Activated B cell treated with CpG ODN at 0.5 μM for 24 hours (primary cell): ENCODE measurements at regions of chr5 and their contacts with region 1.

Region 1: GRCh38 chr5:115962503-115963402 is 478 bp downstream of the LVRN start:
- DNase-seq: peak; percentile 22
- ATAC-seq: peak; percentile 25
- H3K4me3 Mint-ChIP-seq: peak overlapping the region; percentile 63
- H3K27ac Mint-ChIP-seq: no peak overlapping the region
- H3K4me1 Mint-ChIP-seq: peaks cover 18% of the 10 kb centered on the region
- H3K27me3 Mint-ChIP-seq: peaks cover 48% of the 10 kb centered on the region
- CTCF ChIP-seq: no peak

Region 2: GRCh38 chr5:114953565-114953964 is 1009.2 kb before region 1 on chr5:
- CTCF ChIA-PET with region 1: no interaction called
- POLR2A ChIA-PET with region 1: no interaction called
- intact Hi-C with region 1: loop called (anchors 5 kb)
- DNase-seq: no peak
- ATAC-seq: peak; percentile 55
- H3K4me3 Mint-ChIP-seq: no peak overlapping the region
- H3K27ac Mint-ChIP-seq: peak overlapping the region; percentile 25
- H3K4me1 Mint-ChIP-seq: peaks cover 39% of the 10 kb centered on the region
- H3K27me3 Mint-ChIP-seq: no peaks in the 10 kb centered on the region
- CTCF ChIP-seq: no peak

Region 3: GRCh38 chr5:115180165-115180709 is 782.5 kb before region 1 on chr5:
- CTCF ChIA-PET with region 1: no interaction called
- POLR2A ChIA-PET with region 1: no interaction called
- intact Hi-C with region 1: no loop called
- DNase-seq: peak; percentile 49
- ATAC-seq: peak; percentile 79
- H3K4me3 Mint-ChIP-seq: peak overlapping the region; percentile 87
- H3K27ac Mint-ChIP-seq: no peak overlapping the region
- H3K4me1 Mint-ChIP-seq: peaks cover 11% of the 10 kb centered on the region
- H3K27me3 Mint-ChIP-seq: peaks cover 74% of the 10 kb centered on the region
- CTCF ChIP-seq: no peak